Posterior cingulate gyrus (tissue), 11 donors: ENCODE measurements at regions of chr4 and their contacts with region 1.

Region 1: GRCh38 chr4:41281038-41281634 is 24.4 kb downstream of the UCHL1 start:
- DNase-seq: peak in 1 of 10 donors; percentile 35

Region 2: GRCh38 chr4:41339812-41340809 is 59.0 kb after region 1 on chr4:
- intact Hi-C with region 1: loop called (anchors 10 kb)
- DNase-seq: peak in 6 of 10 donors; percentile 16 to 85 (median 48)

Region 3: GRCh38 chr4:41360214-41360920 is 79.2 kb after region 1 on chr4:
- intact Hi-C with region 1: loop called (anchors 5 kb)
- DNase-seq: peak; percentile 61 to 97 (median 81)

Region 4: DNA sequence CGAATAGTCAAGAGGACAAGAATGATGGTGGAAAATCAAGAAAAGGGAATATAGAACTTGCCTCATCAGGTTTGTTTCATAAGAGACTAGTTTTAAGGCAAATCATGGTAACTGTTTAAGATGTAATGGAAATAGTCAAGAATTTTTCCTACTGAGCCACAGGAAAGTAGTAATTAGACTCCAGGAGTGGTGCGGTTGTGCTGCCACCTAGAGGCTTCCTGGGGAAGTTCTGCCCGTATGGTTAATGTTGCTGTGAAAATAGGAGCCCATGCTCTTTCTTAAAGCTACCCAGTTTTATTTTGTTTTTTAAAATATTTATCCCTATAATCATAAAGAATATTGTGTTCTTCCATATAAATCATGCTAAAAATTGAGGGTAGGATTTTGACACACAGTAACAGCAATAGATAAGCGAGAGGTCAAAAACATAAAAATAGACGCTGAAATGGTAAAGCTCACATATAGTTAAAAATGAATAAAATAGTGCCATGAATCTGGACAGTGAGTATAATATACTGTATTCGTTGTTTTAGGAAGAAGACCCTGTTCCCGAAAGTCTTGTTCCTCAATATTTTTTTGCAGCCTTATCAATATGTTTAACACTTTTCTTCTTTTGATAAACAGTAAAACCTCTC is 380.4 kb after region 1 on chr4:
- intact Hi-C with region 1: loop called (anchors 1 kb)
- DNase-seq: peak; percentile 28 to 94 (median 68)

Region 5: GRCh38 chr4:41882625-41883347 is 601.6 kb after region 1 on chr4:
- intact Hi-C with region 1: loop called (anchors 2 kb)
- DNase-seq: peak in 4 of 10 donors; percentile 9 to 89 (median 55)